MCF 10A (cell line): ENCODE measurements at regions of chr20 and their contacts with region 1.

Region 1: GRCh38 chr20:16476032-16476431 is 97.2 kb downstream of the KIF16B start:
- DNase-seq: peak; percentile 57
- H3K4me3 Mint-ChIP-seq: no peak overlapping the region
- H3K27ac Mint-ChIP-seq: no peak overlapping the region
- H3K4me1 Mint-ChIP-seq: no peaks in the 10 kb centered on the region
- H3K27me3 Mint-ChIP-seq: no peaks in the 10 kb centered on the region
- CTCF ChIP-seq: peak; percentile 68

Region 2: GRCh38 chr20:16451001-16451400 is 25.0 kb before region 1 on chr20:
- CTCF ChIA-PET with region 1: interaction called, 10 read pairs
- POLR2A ChIA-PET with region 1: no interaction called
- intact Hi-C with region 1: no loop called
- DNase-seq: no peak
- H3K4me3 Mint-ChIP-seq: no peak overlapping the region
- H3K27ac Mint-ChIP-seq: no peak overlapping the region
- H3K4me1 Mint-ChIP-seq: no peaks in the 10 kb centered on the region
- H3K27me3 Mint-ChIP-seq: no peaks in the 10 kb centered on the region
- CTCF ChIP-seq: no peak

Region 3: GRCh38 chr20:16457514-16457913 is 18.5 kb before region 1 on chr20:
- CTCF ChIA-PET with region 1: interaction called, 16 read pairs
- POLR2A ChIA-PET with region 1: no interaction called
- intact Hi-C with region 1: no loop called
- DNase-seq: no peak
- H3K4me3 Mint-ChIP-seq: no peak overlapping the region
- H3K27ac Mint-ChIP-seq: no peak overlapping the region
- H3K4me1 Mint-ChIP-seq: peaks cover 18% of the 10 kb centered on the region
- H3K27me3 Mint-ChIP-seq: no peaks in the 10 kb centered on the region
- CTCF ChIP-seq: no peak

Region 4: DNA sequence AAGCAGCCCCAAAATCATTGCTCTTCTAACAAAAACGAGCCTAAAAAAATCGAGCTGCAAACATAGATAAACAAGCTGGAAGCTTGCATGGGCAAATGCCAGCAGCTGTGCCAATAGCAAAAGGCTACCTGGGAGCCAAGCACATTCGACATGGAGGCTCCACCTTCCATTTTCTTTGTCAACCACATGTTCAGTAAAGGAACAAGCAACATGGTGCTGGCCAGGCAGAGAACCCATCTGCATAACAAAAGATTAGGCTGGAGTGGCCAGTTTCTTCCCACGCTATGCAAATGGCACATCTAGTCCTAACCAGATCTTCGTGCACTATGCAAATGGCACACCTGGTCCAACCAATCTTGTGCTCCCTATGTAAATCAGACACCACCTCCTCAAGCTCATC is 13.3 kb before region 1 on chr20:
- CTCF ChIA-PET with region 1: interaction called, 16 read pairs
- POLR2A ChIA-PET with region 1: no interaction called
- intact Hi-C with region 1: no loop called
- DNase-seq: no peak
- H3K4me3 Mint-ChIP-seq: no peak overlapping the region
- H3K27ac Mint-ChIP-seq: no peak overlapping the region
- H3K4me1 Mint-ChIP-seq: peaks cover 18% of the 10 kb centered on the region
- H3K27me3 Mint-ChIP-seq: no peaks in the 10 kb centered on the region
- CTCF ChIP-seq: no peak